ENCODE measurements at regions of chr4 and their contacts with region 1.

Region 1: DNA sequence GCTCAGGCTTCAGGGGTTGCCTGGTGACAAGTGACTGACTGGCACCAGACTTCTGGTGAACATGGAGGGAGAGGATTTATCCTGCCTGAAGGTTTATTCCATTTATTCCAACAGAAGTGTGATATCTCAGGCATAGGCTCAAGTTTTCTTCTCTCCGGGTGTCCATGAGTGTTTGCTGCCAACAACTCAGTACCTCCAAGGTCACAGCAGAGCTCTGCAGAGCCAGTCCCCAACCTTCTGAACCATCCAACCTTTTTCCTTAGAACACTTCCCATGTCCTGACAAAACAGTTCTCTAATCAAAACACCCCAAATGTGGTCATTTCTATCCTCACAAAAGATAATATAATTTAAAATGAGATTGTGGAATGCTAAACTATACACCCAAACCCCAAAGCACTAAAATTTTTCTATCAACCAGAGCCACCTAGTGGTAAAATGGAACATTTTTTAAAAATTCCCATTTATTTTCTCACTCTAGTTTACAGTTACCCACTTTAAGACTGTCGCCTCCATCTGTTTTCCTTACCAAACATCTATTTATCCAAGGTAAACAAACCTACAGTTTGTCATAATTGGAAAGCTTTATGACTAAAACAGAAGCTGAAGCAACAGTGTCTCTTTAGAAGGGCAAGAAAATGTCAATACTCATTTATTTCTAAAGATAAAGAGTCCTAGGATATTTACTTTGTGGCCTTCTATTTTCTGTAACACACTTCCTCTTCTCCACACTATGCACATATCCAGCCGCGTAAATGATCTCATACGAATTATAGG is 39.6 kb downstream of the TMEM154 start:
- DNase-seq: peak; percentile 44
- H3K4me3 ChIP-seq: no peak overlapping the region
- H3K27ac ChIP-seq: no peak overlapping the region
- H3K4me1 ChIP-seq: peaks cover 97% of the 10 kb centered on the region
- CTCF ChIP-seq: peak; percentile 96

Region 2: DNA sequence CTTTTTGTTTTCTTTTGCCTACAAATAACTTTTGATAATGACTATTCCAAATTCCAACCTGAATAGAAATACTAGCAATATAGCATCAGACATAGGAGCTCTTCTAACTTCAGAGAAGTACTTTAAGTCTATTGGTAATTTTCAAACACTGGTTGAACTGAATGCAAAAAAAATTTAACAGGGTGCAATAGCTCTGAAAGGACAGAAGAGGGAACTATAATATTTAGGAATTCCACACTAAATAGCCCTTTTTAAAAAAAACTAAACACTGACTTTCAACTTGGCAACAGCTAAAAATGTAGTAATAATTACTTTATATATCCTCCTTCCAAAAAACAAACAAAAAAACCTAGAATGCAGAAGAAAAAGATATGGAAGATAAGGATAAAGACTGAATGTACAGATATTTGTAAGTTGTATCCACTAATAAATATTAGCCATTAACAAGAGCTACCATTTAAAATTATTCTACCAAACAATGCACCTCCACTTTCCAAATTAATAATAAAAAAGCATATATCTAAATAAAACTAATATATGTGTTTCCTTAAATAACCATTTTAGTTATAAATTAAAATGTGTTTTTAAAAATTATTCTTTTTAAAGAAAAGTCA is 185.7 kb before region 1 on chr4:
- CTCF ChIA-PET with region 1: interaction called, 3 read pairs
- POLR2A ChIA-PET with region 1: interaction called, 9 read pairs
- intact Hi-C with region 1: loop called (anchors 1 kb)
- DNase-seq: peak; percentile 47
- H3K4me3 ChIP-seq: no peak overlapping the region
- H3K27ac ChIP-seq: no peak overlapping the region
- H3K4me1 ChIP-seq: peaks cover 35% of the 10 kb centered on the region
- CTCF ChIP-seq: peak; percentile 95

Region 3: GRCh38 chr4:152535903-152536544 is 104.2 kb before region 1 on chr4 and contains the start of gene FBXW7:
- CTCF ChIA-PET with region 1: no interaction called
- POLR2A ChIA-PET with region 1: interaction called, 24 read pairs
- intact Hi-C with region 1: loop called (anchors 1 kb)
- DNase-seq: peak; percentile 99
- H3K4me3 ChIP-seq: peak within 1 kb of the TSS; percentile 84
- H3K27ac ChIP-seq: peak within 1 kb of the TSS; percentile 90
- H3K4me1 ChIP-seq: peaks cover 48% of the 10 kb centered on the region
- CTCF ChIP-seq: no peak
- total RNA-seq, gene FBXW7: 58.8 and 97.7 TPM in 2 replicates

Region 4: GRCh38 chr4:152655272-152656129 is 15.3 kb after region 1 on chr4:
- CTCF ChIA-PET with region 1: no interaction called
- POLR2A ChIA-PET with region 1: interaction called, 183 read pairs
- intact Hi-C with region 1: no loop called
- DNase-seq: no peak
- H3K4me3 ChIP-seq: no peak overlapping the region
- H3K27ac ChIP-seq: no peak overlapping the region
- H3K4me1 ChIP-seq: peaks cover 32% of the 10 kb centered on the region
- CTCF ChIP-seq: no peak

Region 5: GRCh38 chr4:152679414-152680281 is 39.4 kb after region 1 on chr4 and contains the start of gene TMEM154:
- CTCF ChIA-PET with region 1: interaction called, 6 read pairs
- POLR2A ChIA-PET with region 1: interaction called, 249 read pairs
- intact Hi-C with region 1: loop called (anchors 1 kb)
- DNase-seq: peak; percentile 91
- H3K4me3 ChIP-seq: peak within 1 kb of the TSS; percentile 72
- H3K27ac ChIP-seq: peak within 1 kb of the TSS; percentile 63
- H3K4me1 ChIP-seq: peaks cover 85% of the 10 kb centered on the region
- CTCF ChIP-seq: no peak
- total RNA-seq, gene TMEM154: 16.1 and 17.6 TPM in 2 replicates

Measured in OCI-LY7 (cell line).